ENCODE measurements at regions of chr16 and their contacts with region 1.

Region 1: DNA sequence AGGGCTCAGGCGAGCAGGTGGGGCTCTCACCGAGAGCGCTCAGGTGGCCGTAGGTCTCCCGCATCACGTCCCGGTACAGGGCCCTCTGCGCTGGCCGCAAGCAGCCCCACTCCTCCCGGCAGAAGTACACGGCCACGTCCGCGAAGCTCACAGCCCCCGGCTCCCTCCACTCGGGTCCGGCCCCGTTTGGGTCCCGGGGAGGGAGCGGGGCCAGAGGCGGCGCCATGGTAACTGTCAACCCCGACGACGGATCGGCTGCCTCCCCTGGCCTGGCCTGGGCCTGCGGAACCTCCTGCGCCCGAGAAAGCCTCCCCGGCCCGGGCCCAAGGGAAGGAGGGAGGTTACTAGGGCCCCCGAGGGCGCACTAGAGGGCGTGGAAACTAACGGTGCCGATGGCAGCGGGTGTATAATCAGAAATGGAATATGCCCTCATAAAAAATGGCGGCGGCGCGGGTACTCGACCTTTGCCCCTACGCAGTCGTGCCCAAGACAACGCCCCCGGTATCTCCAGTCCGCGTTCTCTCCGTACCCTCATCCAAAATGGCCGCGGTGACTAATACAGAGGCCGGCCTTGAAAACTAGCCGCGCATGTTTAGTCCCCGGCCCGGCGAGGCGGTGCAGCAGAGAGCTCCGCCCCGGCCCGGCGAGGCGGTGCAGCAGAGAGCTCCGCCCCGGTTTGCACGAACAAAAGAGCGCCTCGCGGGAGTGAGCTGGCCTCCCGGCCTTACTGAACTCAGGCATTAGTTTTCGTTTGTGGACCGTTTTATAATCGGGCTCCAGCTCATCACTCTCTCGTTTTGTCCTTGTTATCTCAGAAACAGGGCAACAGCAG is at the start of gene ZNF764:
- DNase-seq: peak; percentile 96 to 97 (median 96)
- H3K4me3 ChIP-seq: peak within 1 kb of the TSS; percentile 61 to 93 (median 80)
- H3K4me3 Mint-ChIP-seq: peak within 1 kb of the TSS; percentile 83 to 88
- H3K27ac ChIP-seq: peak within 1 kb of the TSS; percentile 76 to 80
- H3K27ac Mint-ChIP-seq: peak within 1 kb of the TSS; percentile 92 to 98 (median 95)
- H3K4me1 ChIP-seq: peaks cover 49 to 61% of the 10 kb centered on the region in 2 donors
- H3K4me1 Mint-ChIP-seq: peaks cover 56% of the 10 kb centered on the region
- H3K27me3 ChIP-seq: no peaks in the 10 kb centered on the region
- H3K27me3 Mint-ChIP-seq: peaks cover 0 to 5% (median 0%) of the 10 kb centered on the region in 3 donors
- CTCF ChIP-seq: no peak
- polyA plus RNA-seq, gene ZNF764: 0.94 to 4.6 (median 1.0) TPM

Region 2: DNA sequence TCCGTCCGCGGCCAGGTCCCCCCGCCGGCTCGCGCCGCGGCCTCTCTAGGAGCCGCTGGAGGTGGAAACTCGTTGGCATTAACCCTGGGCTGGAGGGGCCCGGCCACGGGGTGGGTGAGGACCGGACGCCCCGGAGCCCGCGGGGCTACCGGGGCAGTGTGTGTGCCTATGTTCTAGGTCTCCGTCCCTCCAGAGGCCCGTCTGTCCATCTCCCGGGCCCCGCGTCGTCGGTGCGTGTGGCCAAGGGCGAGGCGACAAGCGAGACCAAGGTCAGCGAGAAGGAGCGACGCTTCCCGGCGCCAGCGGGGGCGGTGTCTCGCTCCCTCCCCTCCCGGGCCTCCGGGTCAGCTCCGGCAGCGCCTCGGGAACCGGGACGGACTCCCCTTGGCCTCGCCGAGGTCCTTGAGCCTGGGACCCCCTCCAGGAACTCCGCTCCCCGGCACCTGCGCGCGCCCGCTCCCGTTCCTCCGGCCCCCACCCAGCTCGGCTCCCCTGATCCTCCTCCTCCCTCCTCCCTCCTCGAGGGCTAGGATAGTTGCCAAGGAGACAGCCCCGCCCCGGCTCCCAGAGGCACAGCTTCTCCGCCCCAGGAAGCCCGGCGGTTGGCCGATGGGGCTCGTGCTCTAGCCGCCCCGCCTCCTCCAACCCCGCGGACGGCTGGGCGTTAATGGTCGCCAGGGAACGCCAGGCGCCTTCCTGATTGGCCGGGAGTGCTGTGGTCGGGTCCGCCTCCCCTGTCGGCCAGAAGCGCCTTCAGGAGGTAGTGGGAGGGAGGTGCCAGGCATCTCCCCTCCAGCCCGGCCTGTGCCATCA is 31.1 kb before region 1 on chr16:
- intact Hi-C with region 1: loop called in 1 of 2 experiments (anchors 2 kb)
- DNase-seq: peak; percentile 93 to 96 (median 95)
- H3K4me3 ChIP-seq: peak overlapping the region; percentile 59 to 93 (median 63)
- H3K4me3 Mint-ChIP-seq: peak overlapping the region; percentile 84 to 92
- H3K27ac ChIP-seq: peak overlapping the region; percentile 85 to 87
- H3K27ac Mint-ChIP-seq: peak overlapping the region; percentile 92 to 97 (median 97)
- H3K4me1 ChIP-seq: peaks cover 28 to 39% of the 10 kb centered on the region in 2 donors
- H3K4me1 Mint-ChIP-seq: peaks cover 29% of the 10 kb centered on the region
- H3K27me3 ChIP-seq: no peaks in the 10 kb centered on the region
- H3K27me3 Mint-ChIP-seq: peaks cover 0 to 4% (median 3%) of the 10 kb centered on the region in 3 donors
- CTCF ChIP-seq: peak; percentile 49

Region 3: DNA sequence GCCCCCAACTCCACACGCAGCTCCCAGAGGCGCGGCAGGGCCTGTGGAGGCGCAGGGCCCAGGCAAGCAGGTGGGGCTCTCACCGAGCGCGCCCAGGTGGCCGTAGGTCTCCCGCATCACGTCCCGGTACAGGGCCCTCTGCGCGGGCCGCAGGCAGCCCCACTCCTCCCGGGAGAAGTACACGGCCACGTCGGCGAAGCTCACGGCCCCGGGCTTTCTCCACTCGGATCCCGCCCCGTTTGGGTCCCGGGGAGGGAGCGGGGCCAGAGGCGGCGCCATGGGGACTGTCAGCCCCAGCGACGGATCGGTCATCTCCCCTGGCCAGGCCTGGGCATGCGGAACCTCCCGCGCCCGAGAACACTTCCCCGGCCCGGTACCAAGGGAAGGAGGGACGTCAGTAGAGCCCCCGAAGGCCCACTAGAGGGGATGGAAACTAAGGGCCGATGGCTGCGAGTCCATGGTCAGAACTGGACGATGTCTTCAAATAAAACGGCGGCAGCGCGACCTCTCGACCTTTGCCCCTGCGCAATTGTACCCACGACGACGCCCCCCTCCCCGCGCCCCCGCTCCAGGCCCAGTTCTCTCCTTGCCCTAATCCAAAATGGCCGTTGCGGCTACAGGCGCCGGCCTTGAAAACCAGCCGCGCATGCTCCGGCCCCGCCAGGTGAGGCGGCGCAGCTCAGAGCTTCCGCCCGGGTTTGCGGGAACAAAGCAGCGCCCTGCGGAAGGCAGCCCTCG is 23.6 kb before region 1 on chr16 and contains the start of gene ZNF747:
- intact Hi-C with region 1: loop called in 1 of 2 experiments (anchors 2 kb)
- DNase-seq: peak; percentile 76 to 82 (median 81)
- H3K4me3 ChIP-seq: peak within 1 kb of the TSS; percentile 71 to 91 (median 87)
- H3K4me3 Mint-ChIP-seq: peak within 1 kb of the TSS; percentile 90 to 97
- H3K27ac ChIP-seq: peak within 1 kb of the TSS; percentile 76 to 80
- H3K27ac Mint-ChIP-seq: peak within 1 kb of the TSS; percentile 87 to 94 (median 91)
- H3K4me1 ChIP-seq: peaks cover 28 to 35% of the 10 kb centered on the region in 2 donors
- H3K4me1 Mint-ChIP-seq: peaks cover 36% of the 10 kb centered on the region
- H3K27me3 ChIP-seq: no peaks in the 10 kb centered on the region
- H3K27me3 Mint-ChIP-seq: peaks cover 0 to 6% (median 2%) of the 10 kb centered on the region in 3 donors
- CTCF ChIP-seq: no peak
- polyA plus RNA-seq, gene ZNF747: 4.1 to 6.6 (median 4.4) TPM

Region 4: DNA sequence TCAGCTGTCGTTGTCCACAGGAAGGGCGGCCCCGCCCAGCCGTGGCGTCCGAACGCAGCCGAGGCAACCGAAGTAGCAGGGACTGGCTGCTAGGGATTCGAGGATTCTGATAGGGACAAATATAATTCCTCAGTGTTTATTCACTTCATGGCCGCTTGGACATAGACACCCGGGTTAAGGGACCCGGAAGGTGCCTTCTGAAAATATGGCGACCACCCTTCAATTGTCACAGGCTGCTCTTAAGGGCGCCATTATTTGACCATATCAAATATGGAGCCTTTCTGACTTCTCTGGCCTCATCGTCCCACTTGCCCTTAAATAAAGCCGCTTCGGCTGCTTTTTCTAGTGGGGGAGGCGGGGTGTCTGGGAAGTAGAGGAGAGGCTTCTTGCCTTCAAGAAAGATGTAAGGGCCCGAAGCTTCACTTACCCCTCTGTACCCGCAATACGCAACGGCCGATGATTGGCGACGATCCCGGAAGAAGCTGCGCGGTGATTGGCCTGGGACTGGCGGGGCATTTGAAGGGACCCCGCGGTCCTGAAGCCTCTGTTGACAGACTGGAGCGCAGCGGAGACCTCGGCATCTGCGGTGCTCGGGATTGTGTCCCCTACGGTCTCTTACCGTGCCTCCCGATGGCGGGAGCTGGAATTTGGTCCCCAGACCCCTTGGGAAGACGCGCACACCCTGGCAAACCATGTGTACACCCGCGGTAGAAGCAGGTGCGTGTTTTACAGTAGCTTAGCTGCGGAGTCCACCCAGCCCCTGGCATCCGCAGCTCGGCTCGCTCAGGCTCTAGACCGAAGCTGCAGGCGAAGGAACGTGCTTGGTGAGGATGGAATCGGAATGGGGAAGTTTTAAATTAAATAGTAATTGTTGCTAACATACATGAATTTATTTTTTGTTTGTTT is 13.8 kb after region 1 on chr16 and contains the start of gene ZNF688:
- intact Hi-C with region 1: loop called (anchors 2 kb)
- DNase-seq: peak; percentile 95 to 97 (median 96)
- H3K4me3 ChIP-seq: peak within 1 kb of the TSS; percentile 81 to 87 (median 87)
- H3K4me3 Mint-ChIP-seq: peak within 1 kb of the TSS; percentile 81 to 91
- H3K27ac ChIP-seq: peak within 1 kb of the TSS; percentile 73 to 90
- H3K27ac Mint-ChIP-seq: peak within 1 kb of the TSS; percentile 91 to 98 (median 96)
- H3K4me1 ChIP-seq: peaks cover 48 to 65% of the 10 kb centered on the region in 2 donors
- H3K4me1 Mint-ChIP-seq: peaks cover 52% of the 10 kb centered on the region
- H3K27me3 ChIP-seq: no peaks in the 10 kb centered on the region
- H3K27me3 Mint-ChIP-seq: peaks cover 0 to 1% (median 1%) of the 10 kb centered on the region in 3 donors
- CTCF ChIP-seq: no peak
- polyA plus RNA-seq, gene ZNF688: 10.3 to 24.1 (median 18.9) TPM